Mammary epithelial cell (primary cell): ENCODE measurements at regions of chr6 and their contacts with region 1.

Region 1: DNA sequence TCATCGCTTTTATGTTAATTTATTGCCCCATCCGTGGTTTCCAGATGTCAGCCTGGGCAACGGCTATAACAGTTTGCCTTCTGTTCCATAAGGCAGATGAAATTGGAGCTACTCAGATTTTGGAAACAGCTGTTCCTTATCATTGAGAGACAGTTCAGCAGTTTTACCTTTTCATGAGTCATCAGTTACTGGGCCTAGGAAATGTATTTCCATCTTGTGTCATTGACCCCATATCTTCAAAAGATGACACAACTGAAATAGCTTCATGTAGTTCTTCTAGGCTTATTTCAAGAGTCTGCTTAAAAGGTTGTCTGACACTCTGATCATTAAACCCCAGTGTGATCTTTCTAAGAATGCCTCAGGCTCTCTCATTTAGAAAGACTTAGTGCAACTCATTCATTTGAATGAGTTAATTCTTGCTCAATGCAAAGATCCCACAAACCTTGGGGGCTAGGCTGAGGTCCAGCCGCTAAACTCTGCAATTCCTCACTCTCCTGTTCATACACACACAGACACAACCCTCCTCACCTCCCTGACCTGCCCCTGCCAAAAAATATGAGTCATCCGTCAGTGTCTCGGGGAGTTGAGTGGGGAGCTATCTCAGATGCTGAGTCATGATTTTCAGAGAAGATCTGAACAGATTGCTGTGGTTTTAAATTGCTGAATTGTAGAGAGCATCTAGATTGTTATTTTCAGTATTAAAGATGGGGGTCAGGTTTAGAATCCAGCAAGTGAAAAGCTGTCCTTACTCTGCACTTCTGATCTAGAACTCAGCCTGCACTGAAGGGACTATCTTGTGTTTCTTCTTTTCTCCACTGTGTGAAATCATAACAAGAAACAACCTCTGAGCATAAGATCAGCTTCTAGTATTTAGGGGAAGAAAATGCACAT is 61.8 kb downstream of the RPP40 start:
- DNase-seq: peak; percentile 97
- H3K4me3 ChIP-seq: no peak overlapping the region
- H3K27ac ChIP-seq: peak overlapping the region; percentile 13
- H3K4me1 ChIP-seq: peaks cover 28% of the 10 kb centered on the region
- H3K27me3 ChIP-seq: no peaks in the 10 kb centered on the region
- CTCF ChIP-seq: no peak

Region 2: GRCh38 chr6:5003604-5004372 is 61.8 kb after region 1 on chr6 and contains the start of gene RPP40:
- CTCF ChIA-PET with region 1: interaction called, 14 read pairs
- dilution Hi-C with region 1: no loop called
- in situ Hi-C with region 1: no loop called
- intact Hi-C with region 1: no loop called
- DNase-seq: peak; percentile 96
- H3K4me3 ChIP-seq: peak within 1 kb of the TSS; percentile 69 to 98 (median 93)
- H3K27ac ChIP-seq: peak within 1 kb of the TSS; percentile 52
- H3K4me1 ChIP-seq: peaks cover 8% of the 10 kb centered on the region
- H3K27me3 ChIP-seq: no peaks in the 10 kb centered on the region
- CTCF ChIP-seq: peak; percentile 58 to 92
- total RNA-seq, gene RPP40: 11.5 to 15.0 TPM